ENCODE measurements at regions of chr2 and their contacts with region 1.

Region 1: GRCh38 chr2:190277234-190278112 is 42.2 kb downstream of the HIBCH start:
- DNase-seq: no peak
- H3K4me3 ChIP-seq: no peak overlapping the region
- H3K27ac ChIP-seq: no peak overlapping the region
- H3K4me1 ChIP-seq: no peaks in the 10 kb centered on the region
- H3K27me3 ChIP-seq: no peaks in the 10 kb centered on the region
- CTCF ChIP-seq: peak; percentile 18 to 49 (median 31)
- EP300 ChIP-seq: no peak
- POLR2A ChIP-seq: no peak

Region 2: GRCh38 chr2:190088917-190089316 is 188.6 kb before region 1 on chr2:
- intact Hi-C with region 1: loop called (anchors 5 kb)
- DNase-seq: no peak
- H3K4me3 ChIP-seq: no peak overlapping the region
- H3K27ac ChIP-seq: no peak overlapping the region
- H3K4me1 ChIP-seq: no peaks in the 10 kb centered on the region
- H3K27me3 ChIP-seq: no peaks in the 10 kb centered on the region
- CTCF ChIP-seq: peak; percentile 65 to 68 (median 68)
- EP300 ChIP-seq: no peak
- POLR2A ChIP-seq: no peak

Region 3: DNA sequence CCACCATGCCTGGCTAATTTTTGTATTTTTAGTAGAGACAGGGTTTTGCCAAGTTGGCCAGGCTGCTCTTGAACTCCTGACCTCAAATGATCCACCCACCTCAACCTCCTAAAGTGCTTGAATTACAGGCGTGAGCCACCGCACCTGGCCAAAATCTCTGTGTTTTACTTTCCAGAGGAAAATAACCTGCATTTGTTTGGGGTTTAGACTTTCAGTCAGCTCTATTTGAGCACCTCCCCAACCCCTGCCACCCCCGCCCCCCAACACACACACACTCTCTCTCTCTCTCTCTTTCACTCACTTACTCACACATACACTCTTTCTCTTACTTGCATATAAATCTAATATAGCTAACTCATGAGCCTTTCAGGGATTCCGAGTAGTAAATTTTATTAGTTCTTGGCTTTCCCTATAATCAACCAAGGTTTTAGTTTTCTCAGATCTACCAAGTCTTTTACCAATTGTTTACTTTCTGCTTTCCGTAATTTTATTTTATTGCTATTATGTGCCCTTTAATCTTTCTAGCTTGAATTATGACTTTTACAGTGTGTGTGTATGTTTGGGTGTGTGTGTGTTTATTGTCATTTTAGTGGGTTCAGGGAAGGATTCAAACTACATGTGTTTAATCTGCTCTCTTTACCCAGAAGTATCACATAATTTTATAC is 155.2 kb after region 1 on chr2:
- intact Hi-C with region 1: no loop called
- DNase-seq: no peak
- H3K4me3 ChIP-seq: no peak overlapping the region
- H3K27ac ChIP-seq: peak overlapping the region in 1 of 4 donors; percentile 7
- H3K4me1 ChIP-seq: peaks cover 4 to 30% (median 23%) of the 10 kb centered on the region in 4 donors
- H3K27me3 ChIP-seq: no peaks in the 10 kb centered on the region
- CTCF ChIP-seq: no peak
- EP300 ChIP-seq: no peak
- POLR2A ChIP-seq: no peak

Measured in esophagus muscularis mucosa (tissue), 4 donors.